ENCODE measurements at regions of chr4 and their contacts with region 1.

Region 1: DNA sequence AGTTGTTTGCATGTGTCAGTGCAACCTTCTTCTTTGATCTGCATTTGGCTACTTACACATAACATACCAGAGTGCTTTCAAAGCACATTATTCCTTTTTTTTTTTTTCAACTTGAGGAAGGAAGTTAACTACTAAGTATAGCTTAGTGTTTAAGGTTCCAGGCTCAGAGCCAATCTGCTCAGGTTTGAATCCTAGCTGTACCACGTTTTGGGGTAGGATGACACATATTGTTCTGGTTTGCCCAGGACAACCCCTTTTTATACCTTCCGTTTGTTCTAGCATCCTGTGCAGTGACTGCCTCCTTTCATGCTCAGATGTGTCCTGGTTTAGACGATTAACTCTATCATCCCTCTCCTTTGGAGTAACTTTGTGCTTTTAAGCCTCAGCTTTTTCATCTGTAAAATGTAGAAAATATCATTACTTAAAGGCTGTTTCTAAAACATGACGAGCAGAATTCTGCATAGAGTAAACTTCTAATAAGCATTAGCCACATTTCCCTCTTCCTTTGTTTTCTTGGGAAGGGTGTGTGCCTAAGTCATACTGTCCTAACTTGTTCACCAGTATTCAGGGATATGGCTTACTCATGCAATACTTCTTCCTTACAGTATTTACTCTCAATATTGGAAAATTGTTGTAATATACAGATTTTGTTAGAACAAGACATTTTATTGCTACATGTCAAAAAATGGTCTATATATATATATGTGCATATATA is 281.3 kb downstream of the C4orf33 start:
- DNase-seq: no peak
- CTCF ChIP-seq: no peak

Region 2: GRCh38 chr4:129129143-129129542 is 248.1 kb before region 1 on chr4:
- CTCF ChIA-PET with region 1: no interaction called
- POLR2A ChIA-PET with region 1: no interaction called
- DNase-seq: no peak
- CTCF ChIP-seq: no peak

Region 3: GRCh38 chr4:129362674-129363274 is 14.5 kb before region 1 on chr4:
- CTCF ChIA-PET with region 1: interaction called, 36 read pairs
- POLR2A ChIA-PET with region 1: no interaction called
- DNase-seq: peak; percentile 45
- CTCF ChIP-seq: peak; percentile 80